CD8-positive, alpha-beta memory T cell (primary cell): ENCODE measurements at regions of chr5 and their contacts with region 1.

Region 1: DNA sequence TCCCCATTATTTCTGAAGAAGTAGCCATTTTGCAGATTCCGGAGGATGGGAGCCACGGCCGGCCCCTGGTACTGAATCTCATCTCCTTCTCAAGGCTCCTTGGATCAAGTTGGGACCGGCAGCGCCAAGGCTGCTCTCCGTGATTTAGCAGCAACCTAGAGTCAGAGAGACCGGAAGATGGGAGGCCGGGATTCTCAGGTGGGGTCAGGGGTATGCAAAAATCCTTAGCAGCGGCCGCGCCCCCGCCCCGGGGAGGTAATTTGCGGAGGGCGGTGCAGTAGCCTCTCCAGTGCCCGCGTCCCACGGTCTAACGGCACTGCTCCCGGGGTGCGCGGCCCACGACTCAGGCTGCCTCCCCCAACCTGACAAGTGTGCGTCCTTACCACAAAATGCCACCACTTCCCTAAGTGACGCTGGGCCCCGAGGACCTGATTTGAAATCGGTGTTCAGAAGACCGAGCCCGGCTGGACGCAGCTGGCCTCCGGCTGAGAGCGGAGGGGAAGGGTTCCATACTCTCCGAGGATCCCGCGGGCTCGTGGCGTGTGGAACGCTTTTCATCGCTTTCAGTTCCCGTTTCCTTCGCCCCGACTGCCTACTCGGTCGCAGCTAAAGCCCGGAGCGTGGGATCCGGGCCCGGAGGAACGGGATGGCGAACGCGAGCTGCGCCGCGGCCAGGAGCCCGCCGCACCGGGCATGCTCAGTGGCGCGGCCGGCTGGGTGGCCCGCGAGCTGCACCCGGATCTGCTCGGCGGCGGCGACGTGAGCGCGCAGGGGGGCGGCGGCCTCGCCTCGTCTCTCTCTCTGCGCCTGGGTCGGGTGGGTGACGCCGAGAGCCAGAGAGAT is at the start of gene SCAMP1:
- DNase-seq: peak; percentile 87 to 97 (median 92)
- H3K4me3 ChIP-seq: peak within 1 kb of the TSS; percentile 96
- H3K4me3 Mint-ChIP-seq: peak within 1 kb of the TSS; percentile 89 to 98 (median 93)
- H3K27ac ChIP-seq: peak within 1 kb of the TSS; percentile 94
- H3K27ac Mint-ChIP-seq: peak within 1 kb of the TSS; percentile 92 to 99 (median 97)
- H3K4me1 ChIP-seq: peaks cover 20% of the 10 kb centered on the region
- H3K4me1 Mint-ChIP-seq: peaks cover 60 to 69% (median 69%) of the 10 kb centered on the region in 3 donors
- H3K27me3 ChIP-seq: no peaks in the 10 kb centered on the region
- H3K27me3 Mint-ChIP-seq: peaks cover 0 to 3% of the 10 kb centered on the region in 2 donors
- total RNA-seq, gene SCAMP1: 15.2 to 17.3 TPM

Region 2: DNA sequence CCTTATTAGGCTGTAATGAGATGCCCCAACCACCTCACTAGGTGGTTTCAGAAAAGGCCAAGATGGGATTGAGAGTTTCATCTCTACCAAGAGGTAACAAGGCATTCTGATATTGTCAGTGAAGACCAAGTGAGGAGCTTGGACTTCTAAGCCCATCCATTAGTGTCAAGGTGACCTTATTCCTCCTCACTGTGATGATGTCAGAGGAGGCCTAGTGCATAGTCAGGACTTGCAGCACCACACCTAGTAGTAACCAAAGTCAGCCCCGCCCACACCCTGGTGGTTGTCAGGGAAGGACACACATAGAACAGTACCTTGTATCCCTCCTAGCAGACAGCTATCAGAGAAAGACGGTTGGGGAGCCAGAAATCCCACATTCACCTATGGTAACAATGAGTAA is 177.3 kb before region 1 on chr5:
- CTCF ChIA-PET with region 1: no interaction called
- POLR2A ChIA-PET with region 1: no interaction called
- DNase-seq: no peak
- H3K4me3 ChIP-seq: no peak overlapping the region
- H3K4me3 Mint-ChIP-seq: no peak overlapping the region
- H3K27ac ChIP-seq: no peak overlapping the region
- H3K27ac Mint-ChIP-seq: no peak overlapping the region
- H3K4me1 ChIP-seq: no peaks in the 10 kb centered on the region
- H3K4me1 Mint-ChIP-seq: peaks cover 13 to 27% (median 27%) of the 10 kb centered on the region in 3 donors
- H3K27me3 ChIP-seq: no peaks in the 10 kb centered on the region
- H3K27me3 Mint-ChIP-seq: no peaks in the 10 kb centered on the region

Region 3: GRCh38 chr5:78243639-78244038 is 116.4 kb before region 1 on chr5:
- CTCF ChIA-PET with region 1: no interaction called
- POLR2A ChIA-PET with region 1: no interaction called
- DNase-seq: no peak
- H3K4me3 ChIP-seq: no peak overlapping the region
- H3K4me3 Mint-ChIP-seq: no peak overlapping the region
- H3K27ac ChIP-seq: no peak overlapping the region
- H3K27ac Mint-ChIP-seq: peak overlapping the region in 1 of 8 donors; percentile 83
- H3K4me1 ChIP-seq: no peaks in the 10 kb centered on the region
- H3K4me1 Mint-ChIP-seq: peaks cover 18 to 29% (median 27%) of the 10 kb centered on the region in 3 donors
- H3K27me3 ChIP-seq: no peaks in the 10 kb centered on the region
- H3K27me3 Mint-ChIP-seq: no peaks in the 10 kb centered on the region

Region 4: GRCh38 chr5:78294248-78295034 is 65.6 kb before region 1 on chr5 and contains the start of gene AP3B1:
- CTCF ChIA-PET with region 1: interaction called, 73 read pairs
- POLR2A ChIA-PET with region 1: interaction called, 111 read pairs
- DNase-seq: peak; percentile 96 to 99 (median 97)
- H3K4me3 ChIP-seq: peak within 1 kb of the TSS; percentile 100
- H3K4me3 Mint-ChIP-seq: peak within 1 kb of the TSS; percentile 90 to 100 (median 99)
- H3K27ac ChIP-seq: peak within 1 kb of the TSS; percentile 93
- H3K27ac Mint-ChIP-seq: peak within 1 kb of the TSS; percentile 93 to 100 (median 99)
- H3K4me1 ChIP-seq: peaks cover 23% of the 10 kb centered on the region
- H3K4me1 Mint-ChIP-seq: peaks cover 40 to 49% (median 47%) of the 10 kb centered on the region in 3 donors
- H3K27me3 ChIP-seq: no peaks in the 10 kb centered on the region
- H3K27me3 Mint-ChIP-seq: peaks cover 0 to 9% of the 10 kb centered on the region in 2 donors
- total RNA-seq, gene AP3B1: 40.3 to 41.1 TPM

Region 5: DNA sequence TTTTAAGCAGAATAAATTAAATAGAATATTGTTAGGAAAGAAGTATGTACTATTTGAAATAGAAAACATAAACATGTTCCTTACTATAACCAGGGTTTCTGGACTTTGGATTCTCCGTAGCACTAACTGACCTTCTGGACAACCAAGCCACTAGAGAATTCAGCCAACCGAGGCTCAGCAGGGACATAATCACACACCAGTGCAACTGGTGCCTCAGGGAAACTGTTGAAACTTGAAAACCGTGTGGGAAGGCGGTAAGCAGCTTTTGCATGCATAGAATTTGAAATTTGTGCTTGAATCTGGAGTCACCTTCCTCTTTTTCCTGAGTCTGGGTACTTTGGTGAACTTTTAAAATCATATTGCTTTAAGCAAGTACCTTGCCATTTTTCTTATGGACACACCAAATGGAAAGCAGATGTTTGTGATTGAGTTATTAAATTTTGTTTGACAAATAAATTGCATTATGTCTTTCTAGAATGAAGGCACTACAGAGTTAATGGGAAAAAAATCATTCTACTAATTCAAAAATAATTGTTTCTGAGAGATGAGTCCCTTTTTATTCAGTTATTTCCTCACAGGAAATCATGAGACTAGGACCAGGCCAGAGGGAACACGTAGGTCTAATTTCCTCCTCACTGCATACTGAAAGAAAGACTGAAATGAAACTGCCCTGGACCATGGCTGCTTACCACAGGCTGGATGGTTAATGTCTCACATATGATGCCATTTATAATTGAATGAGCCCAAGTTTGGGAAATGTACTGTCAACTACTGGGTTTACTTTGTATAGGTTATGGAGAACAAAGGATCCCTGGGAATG is 20.2 kb before region 1 on chr5:
- CTCF ChIA-PET with region 1: no interaction called
- POLR2A ChIA-PET with region 1: no interaction called
- DNase-seq: no peak
- H3K4me3 ChIP-seq: no peak overlapping the region
- H3K4me3 Mint-ChIP-seq: no peak overlapping the region
- H3K27ac ChIP-seq: no peak overlapping the region
- H3K27ac Mint-ChIP-seq: no peak overlapping the region
- H3K4me1 ChIP-seq: no peaks in the 10 kb centered on the region
- H3K4me1 Mint-ChIP-seq: no peaks in the 10 kb centered on the region
- H3K27me3 ChIP-seq: no peaks in the 10 kb centered on the region
- H3K27me3 Mint-ChIP-seq: peaks cover 18 to 34% of the 10 kb centered on the region in 2 donors

Region 6: GRCh38 chr5:78387468-78388153 is 27.6 kb after region 1 on chr5:
- CTCF ChIA-PET with region 1: no interaction called
- POLR2A ChIA-PET with region 1: no interaction called
- DNase-seq: no peak
- H3K4me3 ChIP-seq: no peak overlapping the region
- H3K4me3 Mint-ChIP-seq: peak overlapping the region in 1 of 7 donors; percentile 44
- H3K27ac ChIP-seq: no peak overlapping the region
- H3K27ac Mint-ChIP-seq: peak overlapping the region in 1 of 8 donors; percentile 61
- H3K4me1 ChIP-seq: peaks cover 11% of the 10 kb centered on the region
- H3K4me1 Mint-ChIP-seq: peaks cover 36 to 61% (median 59%) of the 10 kb centered on the region in 3 donors
- H3K27me3 ChIP-seq: no peaks in the 10 kb centered on the region
- H3K27me3 Mint-ChIP-seq: no peaks in the 10 kb centered on the region